Prostate gland (tissue), 2 donors: ENCODE measurements at regions of chr11 and their contacts with region 1.

Region 1: GRCh38 chr11:47932544-47932943 is 47.8 kb upstream of the PTPRJ start:
- DNase-seq: no peak
- H3K4me3 ChIP-seq: no peak overlapping the region
- H3K27ac ChIP-seq: no peak overlapping the region
- H3K4me1 ChIP-seq: no peaks in the 10 kb centered on the region
- H3K27me3 ChIP-seq: no peaks in the 10 kb centered on the region
- CTCF ChIP-seq: no peak
- POLR2A ChIP-seq: no peak

Region 2: DNA sequence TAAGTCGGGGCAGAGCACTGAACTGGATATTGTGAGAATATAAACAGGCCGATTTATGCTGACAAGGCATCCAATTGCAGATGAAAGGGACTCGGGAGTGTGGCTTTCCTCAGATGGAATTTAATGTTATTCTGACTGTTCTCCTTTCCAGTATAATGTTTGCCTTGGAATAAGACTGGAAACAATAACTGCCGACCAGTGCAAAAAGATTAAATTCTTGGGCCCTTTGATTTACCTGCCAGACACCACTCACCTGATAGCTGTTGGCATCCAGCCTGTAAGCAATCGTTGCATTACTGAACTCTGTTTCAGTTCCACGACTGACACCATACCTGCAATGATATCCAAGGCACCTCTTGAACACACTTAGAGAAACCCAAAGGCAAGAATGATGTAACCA is 95.3 kb before region 1 on chr11:
- intact Hi-C with region 1: no loop called
- DNase-seq: no peak
- H3K4me3 ChIP-seq: no peak overlapping the region
- H3K27ac ChIP-seq: no peak overlapping the region
- H3K4me1 ChIP-seq: peaks cover 3% of the 10 kb centered on the region
- H3K27me3 ChIP-seq: no peaks in the 10 kb centered on the region
- CTCF ChIP-seq: no peak
- POLR2A ChIP-seq: no peak

Region 3: GRCh38 chr11:48109046-48109666 is 176.6 kb after region 1 on chr11:
- intact Hi-C with region 1: loop called (anchors 2 kb)
- DNase-seq: no peak
- H3K4me3 ChIP-seq: peak overlapping the region in 1 of 2 donors; percentile 9
- H3K27ac ChIP-seq: peak overlapping the region; percentile 67 to 72
- H3K4me1 ChIP-seq: no peaks in the 10 kb centered on the region
- H3K27me3 ChIP-seq: no peaks in the 10 kb centered on the region
- CTCF ChIP-seq: peak in 3 of 4 experiments; percentile 17 to 60 (median 57)
- POLR2A ChIP-seq: no peak